Activated CD8-positive, alpha-beta T cell treated with anti-CD3 and anti-CD28 coated beads for 36 hours (primary cell): ENCODE measurements at regions of chr1 and their contacts with region 1.

Region 1: GRCh38 chr1:63615768-63616420 is 22.7 kb downstream of the PGM1 start:
- DNase-seq: peak; percentile 68
- ATAC-seq: peak; percentile 69
- H3K4me3 Mint-ChIP-seq: no peak overlapping the region
- H3K27ac Mint-ChIP-seq: no peak overlapping the region
- H3K4me1 Mint-ChIP-seq: no peaks in the 10 kb centered on the region
- H3K27me3 Mint-ChIP-seq: no peaks in the 10 kb centered on the region
- CTCF ChIP-seq: peak; percentile 84

Region 2: DNA sequence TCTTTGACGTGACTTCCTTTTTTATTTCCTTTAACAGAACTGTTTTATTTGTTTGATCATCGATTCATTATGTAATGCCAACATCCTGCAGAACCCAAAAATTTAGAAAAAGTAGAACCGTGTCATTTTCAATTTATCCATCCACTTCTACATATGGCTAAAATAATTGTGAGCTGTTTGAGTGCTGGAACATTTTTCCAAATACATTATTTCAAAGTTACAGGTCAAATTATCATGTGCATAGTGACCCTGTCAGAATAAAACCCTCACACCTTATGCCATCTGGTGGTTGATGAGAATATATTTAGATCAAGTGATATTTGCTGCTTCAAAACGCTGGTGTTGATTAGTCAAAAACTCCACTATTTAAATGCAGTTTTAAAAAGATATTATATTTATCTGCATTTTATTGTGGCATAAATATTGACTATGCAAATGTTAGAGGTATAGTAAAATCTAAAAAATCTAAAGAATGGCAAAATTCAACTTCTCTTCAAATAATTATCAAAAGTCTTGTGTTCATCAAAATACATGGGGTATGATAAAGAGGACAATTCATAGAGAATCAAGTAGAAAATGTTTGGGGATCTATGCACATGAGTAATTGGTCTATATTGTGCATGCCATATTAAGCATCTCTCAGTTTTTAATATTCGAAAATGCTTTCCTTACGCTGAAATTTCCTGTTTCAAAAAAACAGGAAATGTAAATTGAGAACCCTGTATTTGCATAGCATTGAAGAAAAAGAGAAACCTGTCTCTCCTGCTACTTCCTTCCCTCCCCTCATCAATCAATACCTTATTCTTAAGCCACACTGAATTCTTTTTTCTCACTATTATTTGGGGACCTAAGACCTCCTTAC is 627.2 kb after region 1 on chr1:
- CTCF ChIA-PET with region 1: interaction called, 7 read pairs
- POLR2A ChIA-PET with region 1: no interaction called
- intact Hi-C with region 1: loop called (anchors 5 kb)
- DNase-seq: no peak
- ATAC-seq: no peak
- H3K4me3 Mint-ChIP-seq: peak overlapping the region; percentile 24
- H3K27ac Mint-ChIP-seq: no peak overlapping the region
- H3K4me1 Mint-ChIP-seq: peaks cover 20% of the 10 kb centered on the region
- H3K27me3 Mint-ChIP-seq: peaks cover 6% of the 10 kb centered on the region
- CTCF ChIP-seq: peak; percentile 59